K562 (cell line): ENCODE measurements at regions of chr9 and their contacts with region 1.

Region 1: GRCh38 chr9:72856972-72857623 is 95.8 kb downstream of the ALDH1A1 start:
- DNase-seq: peak; percentile 11 to 71 (median 26)
- ATAC-seq: peak; percentile 82
- H3K4me3 ChIP-seq: no peak overlapping the region
- H3K27ac ChIP-seq: peak overlapping the region; percentile 86; the same call in 2 of the 3 replicates
- H3K4me1 ChIP-seq: peaks cover 0 to 18% of the 10 kb centered on the region in 2 experiments; a peak in 4 of 5 replicates
- H3K27me3 ChIP-seq: no peaks in the 10 kb centered on the region
- CTCF ChIP-seq: peak; percentile 20 to 54 (median 44); a peak in 5 of 6 replicates
- EP300 ChIP-seq: no peak
- POLR2A ChIP-seq: no peak
- RAD21 ChIP-seq: peak; percentile 50 to 69

Region 2: GRCh38 chr9:72925126-72925789 is 68.2 kb after region 1 on chr9:
- CTCF ChIA-PET with region 1: no interaction called
- POLR2A ChIA-PET with region 1: no interaction called
- in situ Hi-C with region 1: no loop called
- intact Hi-C with region 1: no loop called
- DNase-seq: no peak
- ATAC-seq: no peak
- H3K4me3 ChIP-seq: no peak overlapping the region
- H3K27ac ChIP-seq: no peak overlapping the region
- H3K4me1 ChIP-seq: no peaks in the 10 kb centered on the region
- H3K27me3 ChIP-seq: no peaks in the 10 kb centered on the region
- CTCF ChIP-seq: no peak
- EP300 ChIP-seq: no peak
- POLR2A ChIP-seq: no peak
- RAD21 ChIP-seq: no peak

Region 3: GRCh38 chr9:72960446-72960845 is 103.3 kb after region 1 on chr9:
- CTCF ChIA-PET with region 1: no interaction called
- POLR2A ChIA-PET with region 1: no interaction called
- in situ Hi-C with region 1: no loop called
- intact Hi-C with region 1: loop called (anchors 5 kb)
- DNase-seq: no peak
- ATAC-seq: peak; percentile 76
- H3K4me3 ChIP-seq: no peak overlapping the region
- H3K27ac ChIP-seq: no peak overlapping the region
- H3K4me1 ChIP-seq: no peaks in the 10 kb centered on the region; a peak in 1 of 5 replicates
- H3K27me3 ChIP-seq: no peaks in the 10 kb centered on the region
- CTCF ChIP-seq: peak in 2 of 3 experiments; percentile 8 to 23; a peak in 2 of 6 replicates
- EP300 ChIP-seq: no peak
- POLR2A ChIP-seq: no peak
- RAD21 ChIP-seq: peak in 1 of 2 experiments; percentile 50; a peak in 2 of 4 replicates

Region 4: DNA sequence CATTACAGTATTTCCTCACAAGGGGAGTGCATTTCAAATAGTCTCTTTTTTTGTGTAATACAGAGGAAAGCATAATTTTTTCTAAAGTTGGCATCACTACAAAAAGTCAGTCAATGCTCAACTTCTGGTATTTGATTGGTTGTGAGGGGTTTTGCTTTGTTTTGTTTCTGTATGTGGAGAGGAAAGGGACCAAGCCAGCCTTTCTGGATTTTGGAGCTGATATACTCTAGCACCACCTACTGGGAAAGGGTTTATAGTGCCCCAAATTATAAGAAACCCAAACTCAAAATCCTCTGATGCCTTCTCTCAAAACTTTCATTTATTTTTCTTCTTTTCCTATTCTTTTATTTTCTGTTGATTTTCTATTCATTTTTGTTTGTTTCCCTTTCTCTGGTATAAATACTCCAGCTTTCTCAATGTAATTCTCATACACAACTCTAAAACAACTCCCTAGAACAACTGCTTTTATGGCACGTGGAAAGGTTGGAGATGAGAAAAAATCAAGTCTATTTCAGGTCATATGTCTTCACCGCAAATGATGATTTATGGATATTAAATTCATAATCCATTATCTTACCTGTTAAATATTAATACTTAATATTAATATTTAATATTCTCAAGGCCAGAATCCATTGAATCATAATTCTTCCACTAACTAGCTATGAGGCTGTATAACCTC is 225.0 kb after region 1 on chr9:
- CTCF ChIA-PET with region 1: interaction called, 3 read pairs
- POLR2A ChIA-PET with region 1: interaction called, 4 read pairs
- in situ Hi-C with region 1: loop called (anchors 5 kb)
- intact Hi-C with region 1: loop called (anchors 5 kb)
- DNase-seq: peak; percentile 13 to 64 (median 33)
- ATAC-seq: peak; percentile 70; the same call in 2 of the 3 replicates
- H3K4me3 ChIP-seq: no peak overlapping the region
- H3K27ac ChIP-seq: no peak overlapping the region
- H3K4me1 ChIP-seq: no peaks in the 10 kb centered on the region; a peak in 1 of 5 replicates
- H3K27me3 ChIP-seq: no peaks in the 10 kb centered on the region
- CTCF ChIP-seq: peak; percentile 54 to 77 (median 66)
- EP300 ChIP-seq: no peak
- POLR2A ChIP-seq: no peak
- RAD21 ChIP-seq: peak; percentile 86 to 87

Region 5: GRCh38 chr9:73089304-73089985 is 232.3 kb after region 1 on chr9:
- CTCF ChIA-PET with region 1: no interaction called
- POLR2A ChIA-PET with region 1: no interaction called
- in situ Hi-C with region 1: loop called (anchors 5 kb)
- intact Hi-C with region 1: loop called (anchors 5 kb)
- DNase-seq: no peak
- ATAC-seq: no peak
- H3K4me3 ChIP-seq: no peak overlapping the region
- H3K27ac ChIP-seq: no peak overlapping the region
- H3K4me1 ChIP-seq: no peaks in the 10 kb centered on the region
- H3K27me3 ChIP-seq: no peaks in the 10 kb centered on the region
- CTCF ChIP-seq: no peak
- EP300 ChIP-seq: no peak
- POLR2A ChIP-seq: no peak
- RAD21 ChIP-seq: no peak

Region 6: DNA sequence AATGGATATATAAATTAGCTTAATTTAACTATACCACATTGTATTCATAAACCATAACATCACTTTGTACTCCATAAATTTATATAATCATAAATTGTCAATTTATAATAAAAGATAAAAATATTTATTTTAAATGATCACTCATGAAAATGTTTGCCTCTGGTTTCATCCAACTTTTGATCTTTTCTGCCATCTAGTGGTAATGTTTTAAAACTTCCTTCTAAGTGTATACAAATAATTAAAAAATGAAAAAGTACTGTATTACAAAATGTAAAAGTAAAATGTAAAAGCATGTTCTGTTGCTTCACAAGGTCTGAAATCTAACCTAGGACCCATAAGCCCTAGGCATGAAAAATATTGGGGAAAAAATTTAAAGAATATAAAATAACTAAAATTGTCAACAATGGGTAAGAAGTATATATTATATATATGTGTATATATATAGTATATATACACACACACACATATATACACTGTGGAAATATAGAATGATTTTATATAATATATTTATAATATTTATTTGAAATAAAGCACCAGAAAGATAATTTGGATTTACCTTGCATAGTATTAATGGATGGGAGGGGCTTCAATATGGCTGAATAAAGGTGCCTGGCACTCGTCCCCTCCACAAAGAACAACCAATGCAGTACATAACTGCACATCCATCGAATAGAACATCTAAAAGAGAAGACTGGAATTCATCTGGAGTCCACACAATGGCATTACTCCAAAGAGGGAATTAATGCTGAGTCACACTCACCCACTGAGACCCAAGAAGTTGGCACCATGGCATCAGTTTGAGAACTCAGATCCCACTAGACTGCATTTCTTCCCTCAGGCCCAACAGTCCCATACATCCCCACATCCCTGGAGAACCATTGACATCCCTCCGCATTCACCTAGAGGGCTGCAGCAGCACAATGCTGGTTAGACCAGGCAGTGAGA is 327.1 kb after region 1 on chr9:
- CTCF ChIA-PET with region 1: interaction called, 4 read pairs
- POLR2A ChIA-PET with region 1: interaction called, 3 read pairs
- in situ Hi-C with region 1: no loop called
- intact Hi-C with region 1: loop called (anchors 5 kb)
- DNase-seq: peak in 3 of 4 experiments; percentile 10 to 38 (median 11)
- ATAC-seq: 0 out of 3 replicates have a peak, but pooled peaks have one; percentile 48
- H3K4me3 ChIP-seq: no peak overlapping the region
- H3K27ac ChIP-seq: no peak overlapping the region; the same call in 2 of the 3 replicates
- H3K4me1 ChIP-seq: no peaks in the 10 kb centered on the region
- H3K27me3 ChIP-seq: no peaks in the 10 kb centered on the region
- CTCF ChIP-seq: peak in 2 of 3 experiments; percentile 14 to 57; a peak in 3 of 6 replicates
- EP300 ChIP-seq: no peak
- POLR2A ChIP-seq: no peak
- RAD21 ChIP-seq: peak; percentile 74